SK-N-SH (cell line): ENCODE measurements at regions of chr22 and their contacts with region 1.

Region 1: DNA sequence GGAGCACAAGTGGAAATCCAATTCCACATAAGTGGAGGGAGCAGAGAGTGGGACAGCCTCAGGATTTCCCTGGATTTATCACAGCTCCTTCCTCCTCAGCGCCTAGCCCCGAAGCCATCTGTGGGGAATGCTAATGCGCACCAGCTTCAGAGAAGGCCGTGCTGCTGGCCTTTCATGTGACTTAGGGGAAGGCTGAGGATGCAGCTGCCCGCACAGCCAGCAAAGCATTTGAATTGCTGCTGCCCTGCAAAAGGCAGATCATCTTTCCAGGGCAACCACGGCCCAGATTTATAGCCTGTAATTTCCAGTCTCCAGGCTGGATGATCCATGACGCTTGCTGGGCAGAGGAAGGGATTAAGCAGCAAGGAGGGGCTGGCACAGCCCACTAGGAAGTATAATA is 29.9 kb downstream of the SYN3 start:
- DNase-seq: no peak
- H3K4me3 ChIP-seq: no peak overlapping the region
- H3K27ac ChIP-seq: no peak overlapping the region
- H3K4me1 ChIP-seq: peaks cover 0 to 2% of the 10 kb centered on the region in 2 experiments; a peak in 1 of 4 replicates
- H3K27me3 ChIP-seq: no peaks in the 10 kb centered on the region
- CTCF ChIP-seq: no peak
- EP300 ChIP-seq: no peak
- RAD21 ChIP-seq: no peak

Region 2: GRCh38 chr22:33126881-33127280 is 98.6 kb after region 1 on chr22:
- CTCF ChIA-PET with region 1: interaction called, 13 read pairs
- POLR2A ChIA-PET with region 1: no interaction called
- DNase-seq: peak; percentile 52
- H3K4me3 ChIP-seq: no peak overlapping the region
- H3K27ac ChIP-seq: no peak overlapping the region
- H3K4me1 ChIP-seq: no peaks in the 10 kb centered on the region
- H3K27me3 ChIP-seq: no peaks in the 10 kb centered on the region
- CTCF ChIP-seq: no peak
- EP300 ChIP-seq: no peak
- RAD21 ChIP-seq: peak; percentile 85

Region 3: GRCh38 chr22:33194529-33195077 is 166.4 kb after region 1 on chr22:
- CTCF ChIA-PET with region 1: no interaction called
- POLR2A ChIA-PET with region 1: no interaction called
- DNase-seq: no peak
- H3K4me3 ChIP-seq: no peak overlapping the region
- H3K27ac ChIP-seq: no peak overlapping the region
- H3K4me1 ChIP-seq: no peaks in the 10 kb centered on the region
- H3K27me3 ChIP-seq: no peaks in the 10 kb centered on the region
- CTCF ChIP-seq: no peak
- EP300 ChIP-seq: no peak
- RAD21 ChIP-seq: no peak